IMR-90 (cell line): ENCODE measurements at regions of chr1 and their contacts with region 1.

Region 1: DNA sequence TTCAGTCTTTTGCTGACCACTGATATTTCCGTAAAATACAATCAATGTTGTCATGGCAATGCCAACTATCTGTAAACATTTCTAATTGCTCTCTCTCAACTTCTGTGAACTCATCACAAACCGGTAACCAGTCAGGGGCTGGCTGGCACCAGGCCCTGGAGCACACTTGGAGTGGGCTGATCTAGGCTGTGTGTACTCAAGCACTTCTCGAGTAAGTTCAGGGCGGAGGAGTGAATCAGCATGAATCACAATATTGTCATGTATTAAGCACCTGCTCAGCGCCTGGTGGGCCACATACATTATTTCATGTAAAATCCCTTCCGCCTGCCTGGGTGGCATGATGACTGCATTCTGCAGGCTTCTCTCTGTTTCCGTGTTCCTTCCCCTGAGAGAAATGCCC is 212.4 kb downstream of the FOXD2 start:
- DNase-seq: peak; percentile 80
- ATAC-seq: peak; percentile 37
- H3K4me3 ChIP-seq: no peak overlapping the region
- H3K27ac ChIP-seq: no peak overlapping the region
- H3K4me1 ChIP-seq: no peaks in the 10 kb centered on the region
- H3K27me3 ChIP-seq: no peaks in the 10 kb centered on the region
- CTCF ChIP-seq: no peak
- POLR2A ChIP-seq: no peak
- RAD21 ChIP-seq: no peak

Region 2: GRCh38 chr1:47710329-47711071 is 60.3 kb after region 1 on chr1:
- CTCF ChIA-PET with region 1: no interaction called
- POLR2A ChIA-PET with region 1: no interaction called
- dilution Hi-C with region 1: no loop called
- in situ Hi-C with region 1: no loop called
- intact Hi-C with region 1: no loop called
- DNase-seq: peak; percentile 37
- ATAC-seq: peak; percentile 93
- H3K4me3 ChIP-seq: no peak overlapping the region
- H3K27ac ChIP-seq: no peak overlapping the region
- H3K4me1 ChIP-seq: no peaks in the 10 kb centered on the region; the same call in 1 of the 2 replicates
- H3K27me3 ChIP-seq: peaks cover 61% of the 10 kb centered on the region
- CTCF ChIP-seq: peak; percentile 95
- POLR2A ChIP-seq: 0 out of 2 replicates have a peak, but pooled peaks have one; percentile 32
- RAD21 ChIP-seq: peak; percentile 95

Region 3: GRCh38 chr1:48214820-48215219 is 564.6 kb after region 1 on chr1:
- CTCF ChIA-PET with region 1: no interaction called
- POLR2A ChIA-PET with region 1: no interaction called
- dilution Hi-C with region 1: no loop called
- in situ Hi-C with region 1: no loop called
- intact Hi-C with region 1: loop called (anchors 10 kb)
- DNase-seq: no peak
- ATAC-seq: no peak
- H3K4me3 ChIP-seq: no peak overlapping the region
- H3K27ac ChIP-seq: no peak overlapping the region
- H3K4me1 ChIP-seq: no peaks in the 10 kb centered on the region
- H3K27me3 ChIP-seq: no peaks in the 10 kb centered on the region
- CTCF ChIP-seq: no peak
- POLR2A ChIP-seq: no peak
- RAD21 ChIP-seq: no peak